PC-9 (cell line): ENCODE measurements at regions of chr17 and their contacts with region 1.

Region 1: GRCh38 chr17:47621293-47622178 is 28.2 kb upstream of the KPNB1 start:
- DNase-seq: peak; percentile 70 to 87
- H3K4me3 ChIP-seq: no peak overlapping the region
- H3K27ac ChIP-seq: peak overlapping the region; percentile 71
- H3K4me1 ChIP-seq: peaks cover 37% of the 10 kb centered on the region
- H3K27me3 ChIP-seq: no peaks in the 10 kb centered on the region
- CTCF ChIP-seq: no peak

Region 2: GRCh38 chr17:47649153-47649971 is 27.8 kb after region 1 on chr17 and contains the start of gene KPNB1:
- CTCF ChIA-PET with region 1: no interaction called
- POLR2A ChIA-PET with region 1: interaction called, 30 read pairs
- intact Hi-C with region 1: no loop called
- DNase-seq: peak; percentile 99
- H3K4me3 ChIP-seq: peak within 1 kb of the TSS; percentile 98
- H3K27ac ChIP-seq: peak within 1 kb of the TSS; percentile 82
- H3K4me1 ChIP-seq: peaks cover 20% of the 10 kb centered on the region
- H3K27me3 ChIP-seq: no peaks in the 10 kb centered on the region
- CTCF ChIP-seq: no peak
- total RNA-seq, gene KPNB1: 305 and 306 TPM in 2 replicates

Region 3: DNA sequence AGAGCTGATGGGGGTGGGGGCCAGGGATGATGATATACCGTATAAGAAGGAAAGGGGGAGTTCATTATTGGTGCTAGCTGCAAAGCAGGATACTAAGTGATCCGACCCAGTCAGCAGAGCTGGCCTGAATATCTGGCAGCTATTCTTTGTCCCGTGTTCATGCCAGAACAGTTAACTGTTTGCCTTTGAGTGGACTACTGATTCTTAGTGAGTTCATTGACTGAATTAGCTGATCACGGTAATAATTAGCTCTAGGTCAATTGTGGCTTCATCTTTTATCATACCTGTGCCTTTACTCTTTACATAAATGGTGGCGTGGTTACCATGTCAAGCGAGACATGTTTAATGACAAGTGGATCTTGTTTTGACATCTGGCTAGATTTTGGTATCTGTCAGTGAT is 33.5 kb after region 1 on chr17:
- CTCF ChIA-PET with region 1: no interaction called
- POLR2A ChIA-PET with region 1: interaction called, 16 read pairs
- intact Hi-C with region 1: no loop called
- DNase-seq: no peak
- H3K4me3 ChIP-seq: no peak overlapping the region
- H3K27ac ChIP-seq: no peak overlapping the region
- H3K4me1 ChIP-seq: peaks cover 20% of the 10 kb centered on the region
- H3K27me3 ChIP-seq: no peaks in the 10 kb centered on the region
- CTCF ChIP-seq: no peak